ENCODE measurements at regions of chr10 and their contacts with region 1.

Region 1: DNA sequence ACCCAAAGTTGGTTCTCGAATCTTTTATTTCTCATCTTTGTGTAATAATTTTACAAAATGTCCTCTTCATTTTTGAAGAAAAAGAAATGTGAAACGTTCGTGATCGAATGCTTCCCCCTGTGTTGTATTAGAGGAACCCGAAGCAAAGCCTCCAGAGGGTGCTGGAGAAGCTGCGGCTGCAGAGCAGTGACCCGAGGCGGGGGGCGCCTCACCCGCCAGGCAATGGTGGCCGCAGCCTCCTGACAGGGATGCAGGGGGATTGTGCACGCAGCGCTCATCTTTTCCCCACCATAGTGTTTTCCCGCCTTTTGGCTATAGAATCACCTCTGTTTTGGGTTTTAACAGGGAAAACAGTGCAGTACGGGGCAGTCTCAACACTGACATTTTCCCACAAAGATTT is 307.5 kb upstream of the ANKRD30A start:
- DNase-seq: peak; percentile 19
- ATAC-seq: peak; percentile 74
- H3K4me3 Mint-ChIP-seq: no peak overlapping the region
- H3K27ac Mint-ChIP-seq: no peak overlapping the region
- H3K4me1 Mint-ChIP-seq: no peaks in the 10 kb centered on the region
- H3K27me3 Mint-ChIP-seq: no peaks in the 10 kb centered on the region; the same call in 1 of the 2 replicates
- CTCF ChIP-seq: no peak

Region 2: DNA sequence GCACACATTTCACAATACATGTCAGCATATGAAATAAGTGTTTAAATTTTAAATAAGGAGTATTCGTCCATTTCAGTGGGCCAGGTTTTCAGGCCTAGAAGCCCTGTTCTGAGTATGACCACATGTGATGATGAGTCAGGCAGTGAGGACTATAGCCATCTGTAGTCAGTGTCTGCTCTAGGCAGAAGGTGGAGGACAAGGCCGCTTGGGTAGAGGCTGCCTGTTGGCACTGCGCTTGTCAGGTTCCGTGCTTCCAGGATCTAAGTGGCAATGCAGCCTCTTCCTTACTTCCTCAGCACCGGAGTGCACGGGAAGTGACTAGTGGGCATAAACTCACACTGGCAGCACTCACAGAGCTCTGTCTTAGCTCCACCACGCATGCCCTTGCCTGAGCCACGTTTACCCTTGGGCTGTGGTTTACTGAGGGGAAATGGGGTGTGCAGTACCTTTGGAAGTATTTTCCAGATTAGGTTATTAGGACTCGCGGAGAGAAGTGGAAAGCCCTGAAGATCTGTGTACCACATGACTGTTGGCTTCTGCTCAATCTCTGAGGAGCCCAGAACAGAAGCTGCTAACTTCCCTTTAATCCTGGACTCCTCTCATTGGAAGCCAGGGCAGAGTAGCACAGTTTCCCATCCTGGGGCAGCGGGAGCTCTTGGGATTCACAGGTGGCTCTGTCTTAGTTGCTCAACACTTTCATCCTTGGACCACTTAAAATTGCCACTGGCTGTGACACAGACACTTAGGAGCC is 1300.3 kb before region 1 on chr10:
- CTCF ChIA-PET with region 1: no interaction called
- POLR2A ChIA-PET with region 1: interaction called, 10 read pairs
- DNase-seq: no peak
- ATAC-seq: 0 out of 2 replicates have a peak, but pooled peaks have one; percentile 20
- H3K4me3 Mint-ChIP-seq: no peak overlapping the region
- H3K27ac Mint-ChIP-seq: peak overlapping the region; percentile 55
- H3K4me1 Mint-ChIP-seq: peaks cover 30% of the 10 kb centered on the region
- H3K27me3 Mint-ChIP-seq: no peaks in the 10 kb centered on the region
- CTCF ChIP-seq: no peak

Measured in WTC11 (cell line).